Activated naive CD4-positive, alpha-beta T cell treated with anti-CD3 and anti-CD28 coated beads for 36 hours (primary cell): ENCODE measurements at regions of chr3 and their contacts with region 1.

Region 1: GRCh38 chr3:124639406-124640237 is 90.6 kb upstream of the UMPS start:
- DNase-seq: peak; percentile 39
- H3K4me3 Mint-ChIP-seq: peak overlapping the region; percentile 2
- H3K27ac Mint-ChIP-seq: peak overlapping the region; percentile 77
- H3K4me1 Mint-ChIP-seq: peaks cover 29% of the 10 kb centered on the region
- H3K27me3 Mint-ChIP-seq: no peaks in the 10 kb centered on the region

Region 2: GRCh38 chr3:124333931-124334640 is 305.5 kb before region 1 on chr3:
- CTCF ChIA-PET with region 1: no interaction called
- intact Hi-C with region 1: no loop called
- DNase-seq: no peak
- H3K4me3 Mint-ChIP-seq: no peak overlapping the region
- H3K27ac Mint-ChIP-seq: no peak overlapping the region
- H3K4me1 Mint-ChIP-seq: no peaks in the 10 kb centered on the region
- H3K27me3 Mint-ChIP-seq: no peaks in the 10 kb centered on the region

Region 3: GRCh38 chr3:124463241-124463640 is 176.4 kb before region 1 on chr3:
- CTCF ChIA-PET with region 1: no interaction called
- intact Hi-C with region 1: no loop called
- DNase-seq: no peak
- H3K4me3 Mint-ChIP-seq: no peak overlapping the region
- H3K27ac Mint-ChIP-seq: no peak overlapping the region
- H3K4me1 Mint-ChIP-seq: no peaks in the 10 kb centered on the region
- H3K27me3 Mint-ChIP-seq: peaks cover 29% of the 10 kb centered on the region

Region 4: DNA sequence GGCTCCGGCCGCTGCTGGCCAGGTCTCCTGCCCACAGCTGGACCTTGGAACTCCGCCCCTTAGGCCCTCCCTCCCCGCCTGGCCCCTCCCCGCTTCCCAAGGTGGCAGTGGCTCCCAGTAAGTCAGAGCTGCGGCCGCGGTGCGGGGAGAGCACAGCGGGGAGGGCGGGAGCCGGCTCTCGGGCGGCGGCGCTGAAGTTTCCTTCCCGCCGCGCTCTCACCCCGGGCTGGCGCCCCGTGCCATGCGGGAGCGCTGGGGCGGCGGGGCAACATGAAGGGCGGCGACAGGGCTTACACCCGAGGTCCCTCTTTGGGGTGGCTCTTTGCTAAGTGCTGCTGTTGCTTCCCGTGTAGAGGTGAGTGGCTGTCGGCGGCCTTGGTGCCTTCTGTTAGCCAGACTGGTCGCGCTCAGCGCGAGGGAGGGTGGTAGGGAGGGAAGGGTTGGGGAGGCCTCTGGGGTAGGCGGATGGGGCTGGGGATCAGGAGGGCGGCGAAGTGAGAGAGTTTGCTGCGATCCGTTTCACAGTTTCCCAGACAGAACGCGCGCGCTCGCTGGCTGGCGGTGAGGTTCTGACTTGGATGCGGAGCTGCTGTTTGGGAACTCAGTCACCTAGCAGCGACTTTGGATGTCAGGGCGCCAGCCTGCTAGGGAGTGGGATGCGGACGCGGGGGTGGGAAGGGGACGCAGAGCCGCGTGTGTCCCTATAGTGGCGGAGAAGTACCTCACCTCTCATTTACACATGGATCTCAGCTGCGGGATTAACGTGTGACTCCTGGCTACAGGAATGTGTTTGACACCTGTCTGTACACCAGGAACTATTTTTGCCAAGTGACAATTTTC is 54.9 kb before region 1 on chr3:
- CTCF ChIA-PET with region 1: no interaction called
- intact Hi-C with region 1: loop called (anchors 1 kb)
- DNase-seq: peak; percentile 55
- H3K4me3 Mint-ChIP-seq: peak overlapping the region; percentile 84
- H3K27ac Mint-ChIP-seq: peak overlapping the region; percentile 84
- H3K4me1 Mint-ChIP-seq: peaks cover 59% of the 10 kb centered on the region
- H3K27me3 Mint-ChIP-seq: peaks cover 34% of the 10 kb centered on the region

Region 5: GRCh38 chr3:124620600-124621063 is 19.0 kb before region 1 on chr3:
- CTCF ChIA-PET with region 1: interaction called, 4 read pairs
- intact Hi-C with region 1: loop called (anchors 1 kb)
- DNase-seq: peak; percentile 61
- H3K4me3 Mint-ChIP-seq: no peak overlapping the region
- H3K27ac Mint-ChIP-seq: peak overlapping the region; percentile 7
- H3K4me1 Mint-ChIP-seq: peaks cover 43% of the 10 kb centered on the region
- H3K27me3 Mint-ChIP-seq: no peaks in the 10 kb centered on the region

Region 6: DNA sequence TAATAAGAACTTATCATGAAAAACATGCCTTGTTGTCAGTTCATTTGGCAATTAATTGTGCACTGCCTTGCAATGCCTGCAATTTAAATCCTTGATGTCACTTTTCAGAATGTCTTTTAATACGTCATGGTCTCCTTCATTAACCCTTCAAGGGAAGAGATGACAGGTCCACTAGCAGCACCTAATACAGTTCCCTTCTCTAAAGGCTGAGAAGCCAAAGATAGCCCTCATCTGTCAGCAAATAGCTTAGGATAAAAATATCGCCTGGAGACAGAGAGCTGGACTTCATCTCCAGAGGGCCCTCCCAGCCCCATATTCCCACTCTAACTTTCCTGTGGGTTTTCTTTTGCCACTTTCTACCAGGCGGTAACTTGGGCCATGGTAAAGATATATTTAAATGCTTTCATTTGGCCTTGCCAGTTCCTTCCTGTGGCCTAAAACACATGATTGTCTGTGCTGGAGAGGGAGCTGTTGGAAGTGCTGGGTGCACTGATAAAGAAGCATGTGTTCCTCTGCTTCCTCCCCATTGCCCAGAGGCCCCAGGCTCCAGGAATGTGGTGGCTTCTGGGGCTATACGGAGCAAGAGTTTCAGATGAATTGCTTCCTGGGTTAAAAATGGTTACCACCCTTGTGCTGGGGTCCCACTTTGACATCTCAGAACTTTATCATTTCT is 14.3 kb after region 1 on chr3:
- CTCF ChIA-PET with region 1: interaction called, 3 read pairs
- intact Hi-C with region 1: loop called (anchors 1 kb)
- DNase-seq: no peak
- H3K4me3 Mint-ChIP-seq: no peak overlapping the region
- H3K27ac Mint-ChIP-seq: no peak overlapping the region
- H3K4me1 Mint-ChIP-seq: peaks cover 26% of the 10 kb centered on the region
- H3K27me3 Mint-ChIP-seq: no peaks in the 10 kb centered on the region

Region 7: DNA sequence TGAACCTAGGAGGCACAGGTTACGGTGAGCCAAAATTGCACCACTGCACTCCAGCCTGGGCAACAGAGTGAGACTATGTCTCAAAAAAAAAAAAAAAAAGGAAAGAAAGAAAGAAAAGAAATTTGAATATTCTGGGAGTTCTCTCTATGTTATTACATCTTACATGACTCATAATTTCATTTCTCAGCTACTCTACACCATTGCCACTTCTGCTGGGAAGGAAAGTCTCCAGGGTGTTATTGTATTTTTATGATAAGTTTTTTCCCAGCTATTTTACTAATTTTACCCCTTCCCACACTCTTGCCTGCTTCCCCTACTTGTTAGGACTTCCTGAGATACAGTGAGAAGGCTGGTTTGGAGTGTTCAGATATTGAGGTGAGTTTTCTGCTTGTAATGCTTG is 21.0 kb after region 1 on chr3:
- CTCF ChIA-PET with region 1: no interaction called
- intact Hi-C with region 1: loop called (anchors 1 kb)
- DNase-seq: no peak
- H3K4me3 Mint-ChIP-seq: no peak overlapping the region
- H3K27ac Mint-ChIP-seq: peak overlapping the region; percentile 57
- H3K4me1 Mint-ChIP-seq: peaks cover 24% of the 10 kb centered on the region
- H3K27me3 Mint-ChIP-seq: peaks cover 2% of the 10 kb centered on the region